CD8-positive, alpha-beta T cell (primary cell): ENCODE measurements at regions of chr3 and their contacts with region 1.

Region 1: DNA sequence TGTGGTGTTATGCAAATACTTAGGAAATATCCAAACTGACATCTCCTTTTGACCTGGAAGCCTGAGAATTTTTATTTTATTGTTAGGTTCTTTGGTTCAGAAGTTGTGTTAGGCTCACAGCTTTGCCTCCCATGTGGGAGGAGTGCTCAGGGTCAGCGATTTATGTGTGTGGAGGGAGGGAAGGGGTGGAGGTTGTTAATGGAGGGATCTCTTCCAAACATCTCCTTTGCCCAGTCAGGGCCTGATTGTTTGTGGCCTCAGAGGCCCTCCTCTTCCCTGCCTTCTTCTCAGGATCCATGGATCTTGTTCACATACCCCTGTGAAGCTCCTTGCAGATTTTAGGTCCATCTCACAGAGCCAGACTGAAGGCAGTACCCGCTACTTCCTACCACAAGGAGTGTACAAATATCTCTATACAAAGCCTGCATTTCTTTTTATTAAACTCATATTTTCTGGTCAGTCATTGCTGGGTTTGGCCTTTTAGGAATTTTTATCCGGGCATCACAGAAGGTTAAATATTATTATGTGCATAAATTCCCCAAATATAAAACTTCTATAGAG is 40.3 kb downstream of the BBX start:
- DNase-seq: no peak
- ATAC-seq: no peak
- H3K4me3 ChIP-seq: no peak overlapping the region
- H3K4me3 Mint-ChIP-seq: no peak overlapping the region
- H3K27ac ChIP-seq: no peak overlapping the region
- H3K27ac Mint-ChIP-seq: no peak overlapping the region
- H3K4me1 ChIP-seq: no peaks in the 10 kb centered on the region
- H3K4me1 Mint-ChIP-seq: peaks cover 53% of the 10 kb centered on the region
- H3K27me3 ChIP-seq: no peaks in the 10 kb centered on the region
- H3K27me3 Mint-ChIP-seq: no peaks in the 10 kb centered on the region
- CTCF ChIP-seq: no peak

Region 2: DNA sequence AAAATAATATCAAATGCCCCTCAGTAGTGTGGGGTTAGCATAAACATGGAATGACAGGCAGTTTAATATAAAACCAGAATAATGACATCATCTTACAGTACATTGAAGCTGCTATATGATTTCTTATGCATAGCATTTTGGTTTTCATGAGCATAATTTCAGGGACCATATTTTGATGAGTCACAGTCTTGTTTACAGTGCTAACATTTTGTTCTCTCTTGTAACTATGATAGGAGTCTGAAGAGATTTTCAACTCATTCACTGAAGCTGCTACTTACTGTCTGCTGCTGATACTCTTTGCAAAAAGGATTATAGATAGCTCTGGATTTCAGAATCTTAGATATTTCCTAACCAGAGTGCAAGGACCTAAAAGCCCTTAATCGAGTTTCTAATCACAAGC is 278.4 kb before region 1 on chr3:
- CTCF ChIA-PET with region 1: no interaction called
- POLR2A ChIA-PET with region 1: no interaction called
- intact Hi-C with region 1: no loop called
- DNase-seq: no peak
- ATAC-seq: no peak
- H3K4me3 ChIP-seq: no peak overlapping the region
- H3K4me3 Mint-ChIP-seq: no peak overlapping the region
- H3K27ac ChIP-seq: no peak overlapping the region
- H3K27ac Mint-ChIP-seq: no peak overlapping the region
- H3K4me1 ChIP-seq: no peaks in the 10 kb centered on the region
- H3K4me1 Mint-ChIP-seq: no peaks in the 10 kb centered on the region
- H3K27me3 ChIP-seq: no peaks in the 10 kb centered on the region
- H3K27me3 Mint-ChIP-seq: peaks cover 8% of the 10 kb centered on the region
- CTCF ChIP-seq: no peak

Region 3: DNA sequence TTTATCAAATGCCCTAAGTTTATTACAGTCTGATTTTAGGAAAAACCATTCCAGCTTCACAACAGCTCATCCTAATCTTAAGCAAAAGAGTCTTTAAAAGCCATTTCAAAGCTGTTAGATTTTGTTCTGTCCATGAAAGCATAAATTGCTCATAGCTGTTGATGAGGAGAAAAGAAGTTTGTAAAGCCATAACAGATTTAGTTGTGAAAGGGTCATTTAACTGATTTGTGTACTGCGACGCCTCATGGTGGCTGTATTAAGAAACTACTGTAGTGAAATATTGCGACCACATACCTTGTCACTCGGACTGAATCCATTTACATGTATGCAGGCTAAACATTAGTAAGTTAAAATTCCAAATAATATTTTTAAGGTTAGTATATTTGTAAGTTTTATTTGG is 19.4 kb before region 1 on chr3:
- CTCF ChIA-PET with region 1: no interaction called
- POLR2A ChIA-PET with region 1: no interaction called
- intact Hi-C with region 1: loop called in 1 of 2 experiments (anchors 2 kb)
- DNase-seq: peak in 2 of 9 experiments; percentile 30 to 49
- ATAC-seq: no peak
- H3K4me3 ChIP-seq: no peak overlapping the region
- H3K4me3 Mint-ChIP-seq: no peak overlapping the region
- H3K27ac ChIP-seq: no peak overlapping the region
- H3K27ac Mint-ChIP-seq: no peak overlapping the region
- H3K4me1 ChIP-seq: peaks cover 7% of the 10 kb centered on the region
- H3K4me1 Mint-ChIP-seq: peaks cover 40% of the 10 kb centered on the region
- H3K27me3 ChIP-seq: no peaks in the 10 kb centered on the region
- H3K27me3 Mint-ChIP-seq: no peaks in the 10 kb centered on the region
- CTCF ChIP-seq: no peak

Region 4: GRCh38 chr3:107598926-107599771 is 36.1 kb after region 1 on chr3:
- CTCF ChIA-PET with region 1: no interaction called
- POLR2A ChIA-PET with region 1: interaction called, 3 read pairs
- intact Hi-C with region 1: loop called in 1 of 2 experiments (anchors 5 kb)
- DNase-seq: peak; percentile 2 to 69 (median 44)
- ATAC-seq: peak; percentile 89
- H3K4me3 ChIP-seq: peak overlapping the region; percentile 40
- H3K4me3 Mint-ChIP-seq: peak overlapping the region; percentile 87
- H3K27ac ChIP-seq: peak overlapping the region; percentile 32 to 81
- H3K27ac Mint-ChIP-seq: peak overlapping the region; percentile 94
- H3K4me1 ChIP-seq: peaks cover 31% of the 10 kb centered on the region
- H3K4me1 Mint-ChIP-seq: peaks cover 69% of the 10 kb centered on the region
- H3K27me3 ChIP-seq: no peaks in the 10 kb centered on the region
- H3K27me3 Mint-ChIP-seq: no peaks in the 10 kb centered on the region
- CTCF ChIP-seq: no peak